PC-3 (cell line): ENCODE measurements at regions of chr6 and their contacts with region 1.

Region 1: GRCh38 chr6:84568971-84569370 is 195.4 kb downstream of the TBX18 start:
- DNase-seq: peak; percentile 34
- ATAC-seq: no peak; the same call in 1 of the 2 replicates
- H3K4me3 ChIP-seq: no peak overlapping the region
- H3K27ac ChIP-seq: no peak overlapping the region
- H3K4me1 ChIP-seq: no peaks in the 10 kb centered on the region
- H3K27me3 ChIP-seq: no peaks in the 10 kb centered on the region
- CTCF ChIP-seq: peak; percentile 64

Region 2: GRCh38 chr6:84284428-84285049 is 284.4 kb before region 1 on chr6:
- CTCF ChIA-PET with region 1: no interaction called
- POLR2A ChIA-PET with region 1: no interaction called
- intact Hi-C with region 1: loop called (anchors 5 kb)
- DNase-seq: peak; percentile 35
- ATAC-seq: peak; percentile 63
- H3K4me3 ChIP-seq: no peak overlapping the region
- H3K27ac ChIP-seq: no peak overlapping the region
- H3K4me1 ChIP-seq: no peaks in the 10 kb centered on the region
- H3K27me3 ChIP-seq: peaks cover 35% of the 10 kb centered on the region
- CTCF ChIP-seq: peak; percentile 66

Region 3: GRCh38 chr6:84346364-84346763 is 222.6 kb before region 1 on chr6:
- CTCF ChIA-PET with region 1: no interaction called
- POLR2A ChIA-PET with region 1: no interaction called
- intact Hi-C with region 1: loop called (anchors 2 kb)
- DNase-seq: peak; percentile 11
- ATAC-seq: peak; percentile 56
- H3K4me3 ChIP-seq: no peak overlapping the region
- H3K27ac ChIP-seq: no peak overlapping the region
- H3K4me1 ChIP-seq: no peaks in the 10 kb centered on the region
- H3K27me3 ChIP-seq: no peaks in the 10 kb centered on the region
- CTCF ChIP-seq: peak; percentile 59

Region 4: GRCh38 chr6:84492241-84493165 is 76.5 kb before region 1 on chr6:
- CTCF ChIA-PET with region 1: no interaction called
- POLR2A ChIA-PET with region 1: no interaction called
- intact Hi-C with region 1: no loop called
- DNase-seq: no peak
- ATAC-seq: no peak
- H3K4me3 ChIP-seq: no peak overlapping the region
- H3K27ac ChIP-seq: no peak overlapping the region
- H3K4me1 ChIP-seq: peaks cover 8% of the 10 kb centered on the region; the same call in 1 of the 2 replicates
- H3K27me3 ChIP-seq: no peaks in the 10 kb centered on the region
- CTCF ChIP-seq: no peak

Region 5: GRCh38 chr6:84685983-84686584 is 117.1 kb after region 1 on chr6:
- CTCF ChIA-PET with region 1: no interaction called
- POLR2A ChIA-PET with region 1: no interaction called
- intact Hi-C with region 1: loop called (anchors 5 kb)
- DNase-seq: peak; percentile 74
- ATAC-seq: peak; percentile 24; the same call in 1 of the 2 replicates
- H3K4me3 ChIP-seq: no peak overlapping the region
- H3K27ac ChIP-seq: no peak overlapping the region
- H3K4me1 ChIP-seq: no peaks in the 10 kb centered on the region
- H3K27me3 ChIP-seq: no peaks in the 10 kb centered on the region
- CTCF ChIP-seq: peak; percentile 84